PC-3 (cell line): ENCODE measurements at regions of chr7 and their contacts with region 1.

Region 1: GRCh38 chr7:5704534-5704922 is 76.9 kb downstream of the RNF216 start:
- DNase-seq: peak; percentile 87
- ATAC-seq: peak; percentile 86
- H3K4me3 ChIP-seq: no peak overlapping the region
- H3K27ac ChIP-seq: no peak overlapping the region
- H3K4me1 ChIP-seq: peaks cover 17% of the 10 kb centered on the region
- H3K27me3 ChIP-seq: no peaks in the 10 kb centered on the region
- CTCF ChIP-seq: peak; percentile 94

Region 2: DNA sequence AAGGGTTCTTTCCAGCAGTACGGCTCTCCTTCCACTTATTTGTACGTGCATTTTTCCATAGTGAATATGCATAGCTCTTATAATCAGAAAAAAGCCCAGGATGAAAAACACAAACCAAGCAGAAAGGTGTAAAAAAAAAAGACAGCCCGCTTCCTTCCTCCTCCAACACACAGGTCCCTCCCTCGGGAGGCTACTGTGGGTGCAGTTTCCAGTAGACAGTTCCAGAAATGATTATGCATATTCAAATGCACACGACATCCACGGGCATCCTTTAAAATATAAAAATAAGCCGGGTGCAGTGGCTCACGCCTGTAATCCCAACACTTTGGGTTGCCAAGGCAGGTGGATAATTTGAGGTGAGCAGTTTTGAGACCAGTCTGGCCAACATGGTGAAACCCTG is 340.8 kb before region 1 on chr7:
- CTCF ChIA-PET with region 1: interaction called, 11 read pairs
- POLR2A ChIA-PET with region 1: no interaction called
- intact Hi-C with region 1: no loop called
- DNase-seq: no peak
- ATAC-seq: no peak
- H3K4me3 ChIP-seq: no peak overlapping the region
- H3K27ac ChIP-seq: no peak overlapping the region
- H3K4me1 ChIP-seq: no peaks in the 10 kb centered on the region
- H3K27me3 ChIP-seq: no peaks in the 10 kb centered on the region
- CTCF ChIP-seq: no peak

Region 3: DNA sequence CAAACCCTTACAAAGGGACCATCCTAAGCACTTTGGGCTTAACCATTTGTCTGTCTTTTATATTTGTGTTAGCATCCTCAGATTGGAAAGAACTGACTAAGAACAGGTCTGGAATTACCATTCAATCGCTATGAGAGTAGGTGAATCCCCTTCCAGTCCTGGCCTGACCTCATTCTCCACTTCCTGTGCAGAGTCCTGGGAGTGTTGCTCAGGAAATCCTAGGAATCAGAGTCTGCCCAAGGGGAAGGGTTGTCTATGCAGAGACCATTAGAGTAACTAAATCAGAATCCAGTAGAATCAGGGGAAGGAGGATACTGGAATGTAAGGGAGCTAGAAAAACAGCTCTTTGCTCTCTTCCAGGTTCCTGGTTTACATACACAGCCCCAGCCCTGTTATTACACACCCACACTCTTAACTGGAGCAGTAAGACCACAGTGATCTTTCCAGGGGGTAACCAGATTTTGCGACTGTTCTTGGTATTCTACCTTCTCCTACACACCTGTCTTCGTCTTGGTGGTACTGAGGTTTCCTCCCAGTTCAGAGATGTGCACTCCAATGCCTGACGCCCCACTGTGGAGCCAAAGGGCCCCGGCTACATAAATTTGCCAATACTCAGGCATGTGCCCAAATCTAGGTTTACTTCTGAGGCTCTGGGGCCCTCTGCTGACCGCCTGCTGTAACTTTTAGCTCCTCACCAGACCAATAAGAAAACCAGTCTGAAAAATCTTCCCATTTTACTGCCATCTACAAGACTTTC is 26.8 kb before region 1 on chr7:
- CTCF ChIA-PET with region 1: interaction called, 9 read pairs
- POLR2A ChIA-PET with region 1: no interaction called
- intact Hi-C with region 1: loop called (anchors 1 kb)
- DNase-seq: peak; percentile 70
- ATAC-seq: peak; percentile 93
- H3K4me3 ChIP-seq: no peak overlapping the region
- H3K27ac ChIP-seq: no peak overlapping the region
- H3K4me1 ChIP-seq: peaks cover 8% of the 10 kb centered on the region
- H3K27me3 ChIP-seq: no peaks in the 10 kb centered on the region
- CTCF ChIP-seq: peak; percentile 82

Region 4: DNA sequence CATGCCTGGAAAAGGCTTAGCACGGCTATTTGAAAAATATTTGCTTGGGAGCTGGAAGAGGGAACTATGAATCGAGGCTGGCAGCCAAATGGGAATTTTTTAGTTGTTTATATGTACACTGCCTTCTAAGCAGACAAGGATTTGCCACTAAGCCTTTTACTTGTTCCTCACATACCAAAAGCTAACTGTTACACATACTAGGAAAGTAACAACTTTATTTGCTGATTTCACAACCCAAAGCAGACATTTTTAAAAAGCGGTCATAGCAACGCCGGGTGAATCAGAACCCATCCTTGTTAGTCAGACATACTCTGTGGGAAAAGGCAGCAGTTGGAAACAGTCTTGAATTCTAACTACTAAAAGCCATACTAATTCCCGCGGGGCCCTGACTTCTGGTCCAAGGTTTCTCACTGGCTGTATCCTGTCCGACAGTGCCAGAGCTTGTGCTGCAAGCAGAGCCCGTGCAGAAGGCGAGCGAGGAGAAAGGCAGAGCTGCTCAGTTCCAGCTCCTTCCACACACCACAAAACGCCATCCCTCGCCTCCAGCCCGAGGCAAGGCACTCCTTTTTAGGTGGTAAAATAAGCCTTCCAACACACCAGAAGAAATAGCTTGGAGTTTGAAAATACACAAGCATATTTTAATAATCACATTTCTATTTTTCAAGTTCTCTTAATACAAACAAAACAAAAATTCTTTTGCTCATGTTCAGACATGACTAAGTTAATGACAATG is 12.2 kb before region 1 on chr7:
- CTCF ChIA-PET with region 1: interaction called, 4 read pairs
- POLR2A ChIA-PET with region 1: no interaction called
- intact Hi-C with region 1: loop called (anchors 1 kb)
- DNase-seq: peak; percentile 93
- ATAC-seq: peak; percentile 65
- H3K4me3 ChIP-seq: peak overlapping the region; percentile 62
- H3K27ac ChIP-seq: peak overlapping the region; percentile 98
- H3K4me1 ChIP-seq: peaks cover 55% of the 10 kb centered on the region
- H3K27me3 ChIP-seq: no peaks in the 10 kb centered on the region
- CTCF ChIP-seq: no peak

Region 5: GRCh38 chr7:5750026-5750653 is 45.6 kb after region 1 on chr7:
- CTCF ChIA-PET with region 1: no interaction called
- POLR2A ChIA-PET with region 1: no interaction called
- intact Hi-C with region 1: no loop called
- DNase-seq: no peak
- ATAC-seq: no peak
- H3K4me3 ChIP-seq: no peak overlapping the region
- H3K27ac ChIP-seq: no peak overlapping the region
- H3K4me1 ChIP-seq: no peaks in the 10 kb centered on the region
- H3K27me3 ChIP-seq: no peaks in the 10 kb centered on the region
- CTCF ChIP-seq: no peak

Region 6: DNA sequence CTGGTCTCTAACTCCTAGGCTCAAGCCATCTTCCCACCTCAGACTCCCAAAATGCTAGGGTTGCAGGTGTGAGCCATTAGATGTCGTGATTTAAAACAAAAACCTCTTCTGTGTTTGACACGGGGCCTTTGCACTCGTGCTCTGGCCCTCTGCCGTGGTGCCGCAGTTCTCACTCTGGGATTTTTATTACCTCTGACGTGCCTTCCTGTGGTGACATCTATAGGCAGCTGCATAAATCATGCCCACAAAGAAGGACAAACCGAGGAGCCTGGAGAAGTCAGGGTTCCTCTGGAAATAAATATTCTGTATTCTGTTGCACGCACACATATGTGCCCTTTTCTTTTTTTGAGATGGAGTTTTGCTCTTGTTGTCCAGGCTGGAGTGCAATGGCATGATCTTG is 150.2 kb after region 1 on chr7:
- CTCF ChIA-PET with region 1: no interaction called
- POLR2A ChIA-PET with region 1: no interaction called
- intact Hi-C with region 1: no loop called
- DNase-seq: no peak
- ATAC-seq: no peak
- H3K4me3 ChIP-seq: no peak overlapping the region
- H3K27ac ChIP-seq: no peak overlapping the region
- H3K4me1 ChIP-seq: no peaks in the 10 kb centered on the region
- H3K27me3 ChIP-seq: no peaks in the 10 kb centered on the region
- CTCF ChIP-seq: no peak